ENCODE measurements at regions of chr19 and their contacts with region 1.

Region 1: GRCh38 chr19:48085904-48086864 is 24.4 kb downstream of the PLA2G4C start:
- DNase-seq: peak; percentile 8
- H3K4me3 ChIP-seq: no peak overlapping the region
- H3K27ac ChIP-seq: no peak overlapping the region
- H3K4me1 ChIP-seq: no peaks in the 10 kb centered on the region
- H3K27me3 ChIP-seq: peaks cover 2% of the 10 kb centered on the region
- CTCF ChIP-seq: peak in 1 of 2 donors; percentile 27

Region 2: DNA sequence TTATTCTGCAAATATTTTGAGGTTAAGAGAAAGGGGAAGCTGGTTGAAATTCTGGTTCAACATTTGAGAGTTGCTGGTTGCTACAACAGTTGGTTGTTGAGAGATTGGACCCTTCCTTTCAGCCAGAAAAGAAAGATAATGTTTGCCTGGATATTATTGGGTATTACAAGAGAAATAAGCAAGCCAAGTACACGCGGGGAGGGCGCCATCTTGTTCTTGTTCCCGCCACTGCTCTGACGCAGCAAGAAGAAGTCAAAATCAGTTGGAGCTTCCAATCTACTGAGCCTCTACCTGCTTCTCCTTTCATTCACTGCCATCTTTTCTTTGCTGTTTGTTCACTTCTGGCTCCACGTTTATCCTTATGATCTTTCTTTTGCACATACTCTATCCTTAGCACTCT is 112.7 kb before region 1 on chr19:
- CTCF ChIA-PET with region 1: no interaction called
- dilution Hi-C with region 1: no loop called
- in situ Hi-C with region 1: loop called (anchors 25 kb)
- intact Hi-C with region 1: no loop called
- DNase-seq: no peak
- H3K4me3 ChIP-seq: no peak overlapping the region
- H3K27ac ChIP-seq: no peak overlapping the region
- H3K4me1 ChIP-seq: no peaks in the 10 kb centered on the region
- H3K27me3 ChIP-seq: no peaks in the 10 kb centered on the region
- CTCF ChIP-seq: no peak

Region 3: GRCh38 chr19:47994209-47994802 is 91.9 kb before region 1 on chr19 and contains the start of gene ELSPBP1:
- CTCF ChIA-PET with region 1: no interaction called
- dilution Hi-C with region 1: no loop called
- in situ Hi-C with region 1: loop called in 1 of 2 experiments (anchors 25 kb)
- intact Hi-C with region 1: no loop called
- DNase-seq: no peak
- H3K4me3 ChIP-seq: no peak within 1 kb of the TSS
- H3K27ac ChIP-seq: no peak within 1 kb of the TSS
- H3K4me1 ChIP-seq: no peaks in the 10 kb centered on the region
- H3K27me3 ChIP-seq: peaks cover 2% of the 10 kb centered on the region
- CTCF ChIP-seq: no peak
- total RNA-seq, gene ELSPBP1: not detected

Region 4: DNA sequence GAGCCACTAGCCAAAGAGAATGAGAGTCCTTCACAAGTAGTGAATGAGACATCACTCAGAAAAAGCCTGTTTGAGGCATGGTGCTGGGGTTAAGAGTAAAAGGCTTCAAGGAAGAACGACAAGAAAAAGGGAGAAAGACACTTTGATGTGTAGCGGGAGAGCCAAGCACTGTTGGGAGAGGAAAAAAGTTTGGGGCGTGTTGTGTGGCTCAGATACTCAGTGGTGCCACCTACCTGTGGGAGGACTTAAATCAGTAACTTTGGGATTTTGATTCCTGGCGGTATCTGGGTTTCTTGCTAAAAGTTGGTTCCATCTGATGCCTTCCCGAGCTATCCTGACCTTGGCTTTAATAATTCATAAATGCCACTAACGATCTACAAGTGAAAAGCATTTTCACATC is 79.4 kb before region 1 on chr19:
- CTCF ChIA-PET with region 1: no interaction called
- dilution Hi-C with region 1: loop called (anchors 5 kb)
- in situ Hi-C with region 1: no loop called
- intact Hi-C with region 1: no loop called
- DNase-seq: no peak
- H3K4me3 ChIP-seq: no peak overlapping the region
- H3K27ac ChIP-seq: no peak overlapping the region
- H3K4me1 ChIP-seq: no peaks in the 10 kb centered on the region
- H3K27me3 ChIP-seq: no peaks in the 10 kb centered on the region
- CTCF ChIP-seq: peak; percentile 7 to 14

Region 5: DNA sequence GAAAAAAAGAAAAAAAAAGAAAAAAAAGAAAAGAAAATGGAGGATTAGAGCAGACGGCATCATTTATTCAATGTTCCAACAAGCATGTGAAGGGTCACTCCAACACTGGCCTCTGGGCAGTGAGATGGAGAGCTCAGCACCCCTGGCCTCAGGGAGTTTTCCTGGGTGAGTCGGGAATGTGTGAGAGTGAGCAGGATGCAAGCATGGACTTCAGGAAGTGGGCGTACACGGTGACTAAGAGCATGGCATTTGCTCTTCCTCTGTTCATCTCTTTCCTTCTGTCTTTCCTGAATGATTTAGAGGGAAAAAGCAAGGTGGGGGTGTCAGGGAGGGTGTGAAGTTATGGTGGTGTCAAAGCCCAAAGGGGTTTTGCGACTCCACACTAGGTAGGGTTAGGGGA is 41.6 kb before region 1 on chr19:
- CTCF ChIA-PET with region 1: no interaction called
- dilution Hi-C with region 1: loop called (anchors 5 kb)
- in situ Hi-C with region 1: no loop called
- intact Hi-C with region 1: no loop called
- DNase-seq: no peak
- H3K4me3 ChIP-seq: no peak overlapping the region
- H3K27ac ChIP-seq: no peak overlapping the region
- H3K4me1 ChIP-seq: no peaks in the 10 kb centered on the region
- H3K27me3 ChIP-seq: no peaks in the 10 kb centered on the region
- CTCF ChIP-seq: no peak

Region 6: GRCh38 chr19:48133094-48133493 is 46.9 kb after region 1 on chr19:
- CTCF ChIA-PET with region 1: no interaction called
- dilution Hi-C with region 1: loop called (anchors 5 kb)
- in situ Hi-C with region 1: no loop called
- intact Hi-C with region 1: no loop called
- DNase-seq: no peak
- H3K4me3 ChIP-seq: no peak overlapping the region
- H3K27ac ChIP-seq: no peak overlapping the region
- H3K4me1 ChIP-seq: no peaks in the 10 kb centered on the region
- H3K27me3 ChIP-seq: no peaks in the 10 kb centered on the region
- CTCF ChIP-seq: no peak

Region 7: DNA sequence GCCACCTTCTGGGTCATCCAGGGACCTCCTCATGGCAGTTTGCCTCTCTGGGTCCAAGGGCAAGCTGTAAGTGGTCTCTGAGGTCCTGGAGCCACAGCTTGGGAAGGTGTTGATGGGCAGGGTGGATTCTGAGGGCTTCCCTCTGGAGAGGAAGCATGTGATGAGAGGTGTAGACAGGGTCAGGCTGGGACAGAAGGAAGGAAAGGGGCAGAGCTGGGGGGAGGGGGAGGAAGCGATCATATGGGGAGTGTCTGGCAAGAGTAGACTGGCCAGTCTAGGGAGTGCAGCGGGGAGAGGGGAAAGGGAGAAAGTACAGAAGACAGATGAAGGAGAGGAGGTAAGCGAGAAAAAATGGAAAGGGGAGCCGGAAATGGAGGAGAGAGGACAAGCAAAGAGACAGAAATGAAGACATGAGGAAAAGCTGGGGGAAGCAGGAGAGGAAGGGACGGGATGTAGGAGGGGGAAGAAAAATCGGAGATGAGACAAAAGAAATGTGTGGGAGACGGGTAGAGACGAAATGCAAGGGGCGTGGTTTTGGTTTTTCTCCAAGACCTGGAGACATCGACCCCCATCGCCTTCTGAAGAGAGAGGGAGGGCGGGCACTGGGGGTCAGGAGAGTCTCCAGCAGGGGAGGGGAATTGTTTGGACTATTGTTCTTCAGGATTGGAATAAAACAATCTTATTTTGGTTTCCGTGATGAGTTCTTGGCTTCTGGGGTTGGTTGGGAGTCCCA is 110.9 kb after region 1 on chr19:
- CTCF ChIA-PET with region 1: no interaction called
- dilution Hi-C with region 1: loop called (anchors 5 kb)
- in situ Hi-C with region 1: no loop called
- intact Hi-C with region 1: no loop called
- DNase-seq: no peak
- H3K4me3 ChIP-seq: no peak overlapping the region
- H3K27ac ChIP-seq: no peak overlapping the region
- H3K4me1 ChIP-seq: no peaks in the 10 kb centered on the region
- H3K27me3 ChIP-seq: no peaks in the 10 kb centered on the region
- CTCF ChIP-seq: no peak